ENCODE measurements at regions of chr9 and their contacts with region 1.

Region 1: GRCh38 chr9:114487607-114488300 is 17.5 kb downstream of the WHRN start:
- DNase-seq: no peak
- ATAC-seq: peak; percentile 74

Region 2: GRCh38 chr9:114141553-114142402 is 346.0 kb before region 1 on chr9:
- intact Hi-C with region 1: no loop called
- DNase-seq: peak; percentile 68
- ATAC-seq: peak; percentile 41

Region 3: GRCh38 chr9:114465903-114466530 is 21.7 kb before region 1 on chr9:
- intact Hi-C with region 1: loop called (anchors 2 kb)
- DNase-seq: no peak
- ATAC-seq: no peak

Region 4: DNA sequence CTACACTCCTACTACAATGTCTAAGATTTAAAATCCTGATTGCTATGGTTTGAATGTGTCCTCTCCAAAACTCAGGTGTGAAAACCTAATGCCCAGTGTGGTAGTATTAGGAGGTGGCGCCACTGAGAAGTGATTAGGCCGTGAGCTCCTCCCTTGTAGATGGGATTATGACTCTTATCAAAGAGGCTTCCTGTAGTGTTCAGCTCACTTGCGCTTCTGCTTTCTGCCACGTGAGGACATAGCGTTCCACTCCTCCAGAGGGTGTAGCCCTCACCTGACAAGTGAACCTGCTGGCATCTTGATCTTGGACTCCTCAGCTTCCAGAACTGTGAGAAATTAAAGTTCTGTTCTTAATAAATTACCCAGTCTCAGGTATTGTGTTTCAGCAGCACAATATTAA is 50.5 kb after region 1 on chr9:
- intact Hi-C with region 1: no loop called
- DNase-seq: no peak
- ATAC-seq: no peak

Region 5: DNA sequence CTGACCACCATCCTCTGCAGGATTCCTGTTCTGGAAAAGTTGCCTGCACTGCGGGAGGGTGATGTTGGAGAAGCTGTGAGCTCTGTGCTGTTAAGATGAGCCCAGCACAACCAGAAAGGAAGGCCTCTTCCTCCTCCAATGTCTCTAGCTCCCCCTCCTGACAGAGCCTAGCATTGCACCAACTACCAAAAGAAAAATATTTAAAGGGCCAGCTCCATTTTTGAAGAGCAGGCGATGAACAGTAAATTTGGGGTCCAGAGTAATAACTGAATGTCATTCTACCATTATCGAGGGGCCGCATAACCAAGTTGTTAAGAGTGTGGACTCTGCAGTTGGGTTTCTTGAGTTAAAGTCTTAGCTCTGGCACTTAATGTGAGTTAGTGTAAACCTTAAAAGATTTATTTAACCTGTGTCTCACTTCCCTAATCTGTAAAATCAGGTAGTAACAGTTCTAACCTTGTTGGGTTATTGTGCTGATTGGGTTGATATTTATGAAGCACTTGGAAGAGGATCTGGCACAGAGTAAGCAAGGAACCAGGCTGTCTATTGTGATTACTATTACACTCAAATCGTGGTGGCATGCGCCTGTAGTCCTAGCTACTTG is 165.9 kb after region 1 on chr9:
- intact Hi-C with region 1: loop called (anchors 5 kb)
- DNase-seq: no peak
- ATAC-seq: peak; percentile 65

Region 6: DNA sequence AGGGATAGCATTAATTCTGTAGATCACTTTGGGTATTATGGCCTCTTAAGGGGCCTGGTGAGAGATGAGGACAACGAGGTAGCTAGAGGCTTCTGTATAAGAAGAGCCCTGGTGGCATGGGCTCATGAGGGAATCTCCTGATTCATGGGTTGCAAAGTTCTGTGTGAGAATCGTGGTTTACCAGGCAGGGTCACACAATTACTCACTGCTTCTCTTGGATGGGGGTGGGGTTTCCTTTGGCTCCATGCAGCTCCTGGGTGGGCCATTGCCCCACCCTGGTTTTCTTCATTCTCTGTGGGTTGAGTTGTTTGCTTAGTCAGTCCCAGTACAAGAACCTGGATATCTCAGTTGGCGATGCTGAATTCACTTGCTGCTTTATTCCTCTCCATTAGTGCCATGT is 349.0 kb after region 1 on chr9:
- intact Hi-C with region 1: no loop called
- DNase-seq: no peak
- ATAC-seq: no peak

Measured in Right ventricle myocardium inferior (tissue), 1 donor.